A549 (cell line): ENCODE measurements at regions of chr2 and their contacts with region 1.

Region 1: GRCh38 chr2:182186132-182186735 is 200.6 kb downstream of the PPP1R1C start:
- DNase-seq: peak; percentile 16 to 30
- ATAC-seq: peak; percentile 54 to 81; a peak in 5 of 6 replicates
- H3K4me3 ChIP-seq: no peak overlapping the region
- H3K27ac ChIP-seq: peak overlapping the region in 1 of 2 experiments; percentile 16; a peak in 1 of 6 replicates
- H3K4me1 ChIP-seq: no peaks in the 10 kb centered on the region
- CTCF ChIP-seq: peak; percentile 80
- EP300 ChIP-seq: no peak
- POLR2A ChIP-seq: no peak
- RAD21 ChIP-seq: peak; percentile 80 to 93

Region 2: DNA sequence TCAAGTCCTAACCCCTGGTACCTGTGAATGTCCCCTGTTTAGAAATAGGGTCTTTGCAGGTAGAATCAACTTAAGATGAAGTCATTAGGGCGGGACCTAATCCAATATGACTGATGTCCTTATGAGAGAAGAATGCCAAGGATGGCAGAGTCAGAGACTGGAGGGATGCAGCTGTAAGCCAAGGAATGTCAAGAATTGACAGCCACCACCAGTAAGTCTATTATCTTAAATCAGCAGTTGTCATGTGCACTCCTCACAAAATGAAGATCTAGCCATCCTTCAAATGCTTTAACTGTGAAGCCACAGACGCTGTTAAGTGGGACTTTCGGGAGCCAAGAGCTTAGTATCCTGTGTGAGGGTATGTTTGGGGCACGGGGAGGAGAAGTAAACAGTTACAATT is 645.8 kb before region 1 on chr2:
- CTCF ChIA-PET with region 1: no interaction called
- POLR2A ChIA-PET with region 1: no interaction called
- DNase-seq: no peak
- ATAC-seq: no peak
- H3K4me3 ChIP-seq: no peak overlapping the region
- H3K27ac ChIP-seq: no peak overlapping the region
- H3K4me1 ChIP-seq: no peaks in the 10 kb centered on the region
- CTCF ChIP-seq: no peak
- EP300 ChIP-seq: no peak
- POLR2A ChIP-seq: no peak
- RAD21 ChIP-seq: no peak

Region 3: GRCh38 chr2:182173944-182174622 is 12.2 kb before region 1 on chr2:
- CTCF ChIA-PET with region 1: interaction called, 23 read pairs
- POLR2A ChIA-PET with region 1: no interaction called
- DNase-seq: no peak
- ATAC-seq: no peak
- H3K4me3 ChIP-seq: no peak overlapping the region
- H3K27ac ChIP-seq: no peak overlapping the region
- H3K4me1 ChIP-seq: no peaks in the 10 kb centered on the region
- CTCF ChIP-seq: no peak
- EP300 ChIP-seq: no peak
- POLR2A ChIP-seq: no peak
- RAD21 ChIP-seq: no peak

Region 4: DNA sequence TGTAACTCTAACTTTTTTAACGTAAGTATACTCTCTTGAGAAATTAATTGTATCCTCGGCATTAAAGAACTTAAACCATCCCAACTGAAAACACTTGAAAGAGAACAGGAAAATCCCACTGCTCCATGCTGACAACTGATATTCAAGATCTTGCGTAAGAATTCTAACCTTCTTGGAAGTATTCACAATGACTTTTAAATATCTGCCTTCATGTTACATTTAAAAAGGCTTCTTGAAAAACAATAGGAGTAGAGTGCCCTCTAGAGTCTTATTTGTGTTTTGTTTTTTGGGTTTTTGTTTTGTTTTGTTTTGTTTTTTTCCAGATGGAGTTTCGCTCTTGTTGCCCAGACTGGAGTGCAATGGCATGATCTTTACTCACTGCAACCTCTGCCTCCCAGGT is 464.5 kb after region 1 on chr2:
- CTCF ChIA-PET with region 1: interaction called, 66 read pairs
- POLR2A ChIA-PET with region 1: no interaction called
- DNase-seq: peak; percentile 3 to 53
- ATAC-seq: peak in 1 of 2 experiments; percentile 48; a peak in 3 of 6 replicates
- H3K4me3 ChIP-seq: no peak overlapping the region
- H3K27ac ChIP-seq: 0 out of 6 replicates have a peak overlapping the region, but pooled peaks of 1 of the 2 experiments have one; percentile 58
- H3K4me1 ChIP-seq: no peaks in the 10 kb centered on the region
- CTCF ChIP-seq: peak; percentile 78
- EP300 ChIP-seq: no peak
- POLR2A ChIP-seq: no peak
- RAD21 ChIP-seq: peak; percentile 73 to 85

Region 5: DNA sequence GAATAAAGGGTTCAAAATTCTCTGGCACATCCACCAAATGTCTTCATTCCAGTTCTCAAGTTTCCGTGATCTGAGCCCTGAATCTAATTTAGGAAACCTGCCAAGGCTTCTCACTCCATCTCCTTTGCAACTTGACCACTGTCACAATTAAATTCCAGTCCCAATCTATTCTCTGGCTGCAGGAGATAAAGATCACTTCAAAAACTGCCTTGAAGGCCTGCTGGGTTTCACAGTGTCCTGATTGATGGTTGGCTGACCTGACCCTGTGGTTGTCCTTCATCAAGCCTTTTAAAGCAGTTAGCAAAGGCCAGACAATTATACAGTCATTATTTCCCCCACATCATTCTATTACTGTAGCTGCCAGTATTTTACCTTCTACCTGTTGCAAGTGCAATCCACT is 469.5 kb after region 1 on chr2:
- CTCF ChIA-PET with region 1: interaction called, 16 read pairs
- POLR2A ChIA-PET with region 1: no interaction called
- DNase-seq: no peak
- ATAC-seq: no peak
- H3K4me3 ChIP-seq: no peak overlapping the region
- H3K27ac ChIP-seq: no peak overlapping the region
- H3K4me1 ChIP-seq: no peaks in the 10 kb centered on the region
- CTCF ChIP-seq: no peak
- EP300 ChIP-seq: no peak
- POLR2A ChIP-seq: no peak
- RAD21 ChIP-seq: no peak